ENCODE measurements at regions of chr9 and their contacts with region 1.

Region 1: DNA sequence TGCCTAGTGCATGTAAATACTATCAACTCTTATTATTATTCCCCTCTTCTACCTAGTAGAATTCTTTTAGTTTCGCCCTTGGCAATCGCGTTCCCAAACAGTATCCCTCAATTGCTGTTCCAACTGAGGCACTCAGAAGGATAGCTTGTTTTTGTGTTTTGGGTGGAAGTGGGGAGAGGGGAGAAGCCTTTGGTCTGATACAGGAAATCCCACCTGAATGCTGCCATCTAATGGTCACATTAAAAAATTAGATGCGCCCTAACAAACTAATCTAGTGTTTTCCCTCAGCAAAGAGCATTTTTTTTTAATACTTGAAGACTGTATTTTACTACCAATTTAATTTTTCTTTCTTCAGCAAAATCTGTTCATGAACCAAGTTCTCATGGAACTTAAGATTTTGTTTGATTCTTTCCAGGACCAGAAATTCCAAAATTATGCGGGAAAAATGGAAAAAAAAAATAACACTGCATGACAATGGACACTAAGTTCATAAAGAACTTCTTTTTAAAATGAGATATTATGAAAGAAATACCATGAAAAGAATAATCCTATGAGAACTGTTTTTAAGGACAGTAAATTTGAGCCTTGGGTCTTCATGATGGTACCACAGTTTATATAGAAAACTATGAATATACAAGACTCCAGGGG is 22.2 kb upstream of the GLDC start:
- DNase-seq: peak; percentile 56
- H3K4me3 Mint-ChIP-seq: no peak overlapping the region
- H3K27ac Mint-ChIP-seq: no peak overlapping the region
- H3K4me1 Mint-ChIP-seq: no peaks in the 10 kb centered on the region
- H3K27me3 Mint-ChIP-seq: no peaks in the 10 kb centered on the region
- CTCF ChIP-seq: peak; percentile 51

Region 2: DNA sequence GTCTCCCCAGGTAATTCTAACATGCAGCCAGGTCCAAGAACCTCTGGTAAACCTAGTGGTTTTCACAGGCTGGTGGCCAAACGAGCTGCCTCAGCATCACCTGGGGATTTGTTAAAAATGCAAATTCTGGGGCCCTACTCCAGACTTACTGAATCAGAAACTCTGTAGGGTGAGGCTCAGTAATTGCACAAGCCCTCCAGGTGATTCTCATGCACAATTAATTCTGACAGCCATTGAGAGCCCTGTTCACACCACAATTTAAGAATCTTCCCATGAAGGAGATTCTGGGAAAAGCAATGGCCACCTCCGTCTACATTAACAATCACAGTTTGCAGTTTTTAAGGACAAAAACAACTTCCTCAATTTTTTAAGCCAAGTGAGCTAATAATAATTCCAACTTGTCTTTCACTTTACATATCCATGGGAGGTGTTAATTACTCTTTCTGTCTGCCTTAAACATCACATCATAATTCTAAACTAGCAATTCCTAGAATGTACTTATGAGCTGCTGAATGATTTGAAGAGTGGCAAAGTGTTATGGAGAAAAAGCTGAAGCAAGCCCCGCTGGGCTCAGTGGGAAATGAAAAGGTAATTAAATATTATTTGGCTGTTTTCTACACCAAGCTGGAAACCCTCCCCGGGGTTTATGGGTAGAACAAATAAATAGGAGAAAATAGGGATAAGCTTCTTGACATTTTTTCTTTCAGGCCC is 92.3 kb before region 1 on chr9:
- CTCF ChIA-PET with region 1: interaction called, 23 read pairs
- POLR2A ChIA-PET with region 1: no interaction called
- intact Hi-C with region 1: no loop called
- DNase-seq: no peak
- H3K4me3 Mint-ChIP-seq: no peak overlapping the region
- H3K27ac Mint-ChIP-seq: no peak overlapping the region
- H3K4me1 Mint-ChIP-seq: no peaks in the 10 kb centered on the region
- H3K27me3 Mint-ChIP-seq: no peaks in the 10 kb centered on the region
- CTCF ChIP-seq: no peak

Region 3: GRCh38 chr9:6632516-6633183 is 35.1 kb before region 1 on chr9:
- CTCF ChIA-PET with region 1: interaction called, 12 read pairs
- POLR2A ChIA-PET with region 1: no interaction called
- intact Hi-C with region 1: no loop called
- DNase-seq: peak; percentile 8
- H3K4me3 Mint-ChIP-seq: no peak overlapping the region
- H3K27ac Mint-ChIP-seq: no peak overlapping the region
- H3K4me1 Mint-ChIP-seq: peaks cover 26% of the 10 kb centered on the region
- H3K27me3 Mint-ChIP-seq: no peaks in the 10 kb centered on the region
- CTCF ChIP-seq: no peak

Region 4: DNA sequence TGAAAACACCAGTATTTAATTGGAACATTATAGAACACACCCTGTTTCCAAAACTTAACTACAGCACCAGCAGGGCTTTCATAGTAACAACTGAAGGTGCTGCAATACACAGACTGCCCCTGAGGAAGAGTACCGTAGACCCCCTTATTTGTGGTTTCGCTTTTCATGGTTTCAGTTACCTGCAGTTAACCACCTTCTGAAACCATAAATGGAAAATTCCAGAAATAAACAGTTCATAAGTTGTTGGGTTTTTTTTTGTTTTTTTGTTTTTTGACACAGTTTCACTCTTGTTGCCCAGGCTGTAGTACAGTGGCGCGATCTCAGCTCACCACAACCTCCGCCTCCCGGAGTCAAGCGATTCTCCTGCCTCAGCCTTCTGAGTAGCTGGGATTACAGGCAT is 12.7 kb before region 1 on chr9:
- CTCF ChIA-PET with region 1: interaction called, 32 read pairs
- POLR2A ChIA-PET with region 1: no interaction called
- intact Hi-C with region 1: no loop called
- DNase-seq: no peak
- H3K4me3 Mint-ChIP-seq: no peak overlapping the region
- H3K27ac Mint-ChIP-seq: no peak overlapping the region
- H3K4me1 Mint-ChIP-seq: no peaks in the 10 kb centered on the region
- H3K27me3 Mint-ChIP-seq: no peaks in the 10 kb centered on the region
- CTCF ChIP-seq: no peak

Region 5: GRCh38 chr9:6686396-6686795 is 18.6 kb after region 1 on chr9:
- CTCF ChIA-PET with region 1: interaction called, 12 read pairs
- POLR2A ChIA-PET with region 1: interaction called, 5 read pairs
- intact Hi-C with region 1: no loop called
- DNase-seq: peak; percentile 33
- H3K4me3 Mint-ChIP-seq: no peak overlapping the region
- H3K27ac Mint-ChIP-seq: no peak overlapping the region
- H3K4me1 Mint-ChIP-seq: peaks cover 11% of the 10 kb centered on the region
- H3K27me3 Mint-ChIP-seq: no peaks in the 10 kb centered on the region
- CTCF ChIP-seq: peak; percentile 33

Measured in MCF 10A (cell line).